ENCODE measurements at regions of chr5 and their contacts with region 1.

Region 1: GRCh38 chr5:178732281-178732680 is 1.8 kb upstream of the ZNF354A start:
- DNase-seq: no peak
- ATAC-seq: no peak
- H3K4me3 ChIP-seq: no peak overlapping the region
- H3K27ac ChIP-seq: no peak overlapping the region
- H3K4me1 ChIP-seq: 0 out of 2 replicates have a peak, but pooled peaks cover 2% of the 10 kb centered on the region
- H3K27me3 ChIP-seq: no peaks in the 10 kb centered on the region
- CTCF ChIP-seq: no peak

Region 2: GRCh38 chr5:178279725-178280438 is 452.4 kb before region 1 on chr5:
- CTCF ChIA-PET with region 1: no interaction called
- POLR2A ChIA-PET with region 1: no interaction called
- intact Hi-C with region 1: loop called (anchors 1 kb)
- DNase-seq: peak; percentile 85
- ATAC-seq: peak; percentile 94
- H3K4me3 ChIP-seq: no peak overlapping the region
- H3K27ac ChIP-seq: no peak overlapping the region
- H3K4me1 ChIP-seq: no peaks in the 10 kb centered on the region
- H3K27me3 ChIP-seq: peaks cover 27% of the 10 kb centered on the region
- CTCF ChIP-seq: peak; percentile 98

Region 3: GRCh38 chr5:178706591-178706990 is 25.7 kb before region 1 on chr5:
- CTCF ChIA-PET with region 1: no interaction called
- POLR2A ChIA-PET with region 1: interaction called, 33 read pairs
- intact Hi-C with region 1: no loop called
- DNase-seq: no peak
- ATAC-seq: no peak
- H3K4me3 ChIP-seq: no peak overlapping the region
- H3K27ac ChIP-seq: no peak overlapping the region
- H3K4me1 ChIP-seq: no peaks in the 10 kb centered on the region
- H3K27me3 ChIP-seq: no peaks in the 10 kb centered on the region
- CTCF ChIP-seq: no peak

Region 4: GRCh38 chr5:178838695-178839685 is 106.7 kb after region 1 on chr5:
- CTCF ChIA-PET with region 1: interaction called, 7 read pairs
- POLR2A ChIA-PET with region 1: no interaction called
- intact Hi-C with region 1: loop called (anchors 1 kb)
- DNase-seq: peak; percentile 82
- ATAC-seq: peak; percentile 98
- H3K4me3 ChIP-seq: no peak overlapping the region
- H3K27ac ChIP-seq: no peak overlapping the region
- H3K4me1 ChIP-seq: no peaks in the 10 kb centered on the region
- H3K27me3 ChIP-seq: peaks cover 10% of the 10 kb centered on the region; the same call in 1 of the 2 replicates
- CTCF ChIP-seq: peak; percentile 89

Region 5: DNA sequence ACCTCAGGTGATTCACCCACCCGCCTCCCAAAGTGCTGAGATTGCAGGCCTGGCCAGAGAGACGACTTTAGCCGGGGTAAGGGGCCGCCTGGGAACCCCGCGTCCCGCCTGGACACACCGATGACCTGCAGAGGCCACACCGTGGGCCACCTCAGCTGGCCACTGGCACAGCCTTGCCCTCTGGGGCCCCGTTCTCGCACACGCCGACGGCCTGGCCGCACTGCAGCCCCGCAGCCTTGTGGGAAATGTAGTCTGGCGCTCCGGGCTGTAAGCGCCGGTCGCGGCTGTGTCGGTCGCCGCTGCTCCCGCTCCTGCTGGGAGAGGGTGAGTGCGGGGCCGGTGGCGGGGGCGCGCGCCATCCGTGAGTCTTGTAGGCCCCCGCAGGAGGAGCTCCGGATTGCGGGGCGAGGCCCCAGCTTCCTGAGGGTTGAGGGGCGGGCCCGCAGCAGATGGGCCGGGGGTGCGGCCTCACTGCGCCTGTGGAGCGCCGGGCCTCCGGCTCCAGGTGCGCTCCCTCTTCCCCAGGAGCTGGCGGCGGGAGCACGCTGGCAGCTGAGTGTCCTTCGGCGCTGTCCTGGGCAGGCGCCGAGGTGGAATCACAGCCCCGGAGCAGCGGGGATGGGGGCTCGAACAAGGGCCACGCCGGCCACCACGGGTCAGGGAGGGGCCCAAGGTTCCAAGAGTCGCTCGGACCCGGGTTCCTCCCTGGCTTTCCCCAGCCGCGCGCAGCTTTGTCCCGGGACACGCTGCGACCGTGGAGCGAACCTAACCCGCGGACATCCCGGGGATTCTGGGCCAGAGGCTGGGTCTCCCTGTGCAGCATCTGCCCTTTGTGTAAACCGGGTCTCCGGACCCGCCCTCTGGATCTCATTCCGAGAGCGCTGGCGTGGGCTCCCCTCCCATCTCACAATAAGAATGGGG is 163.6 kb after region 1 on chr5 and contains the start of gene ZFP2:
- CTCF ChIA-PET with region 1: no interaction called
- POLR2A ChIA-PET with region 1: no interaction called
- intact Hi-C with region 1: no loop called
- DNase-seq: peak; percentile 50
- ATAC-seq: peak; percentile 94
- H3K4me3 ChIP-seq: peak within 1 kb of the TSS; percentile 76
- H3K27ac ChIP-seq: no peak within 1 kb of the TSS
- H3K4me1 ChIP-seq: no peaks in the 10 kb centered on the region
- H3K27me3 ChIP-seq: no peaks in the 10 kb centered on the region
- CTCF ChIP-seq: no peak
- total RNA-seq, gene ZFP2: 0.07 TPM in 1 of 2 replicates, not detected in the other

Region 6: GRCh38 chr5:179142434-179143198 is 410.3 kb after region 1 on chr5:
- CTCF ChIA-PET with region 1: no interaction called
- POLR2A ChIA-PET with region 1: no interaction called
- intact Hi-C with region 1: no loop called
- DNase-seq: peak; percentile 27
- ATAC-seq: no peak
- H3K4me3 ChIP-seq: no peak overlapping the region
- H3K27ac ChIP-seq: no peak overlapping the region
- H3K4me1 ChIP-seq: no peaks in the 10 kb centered on the region
- H3K27me3 ChIP-seq: no peaks in the 10 kb centered on the region
- CTCF ChIP-seq: no peak

Region 7: DNA sequence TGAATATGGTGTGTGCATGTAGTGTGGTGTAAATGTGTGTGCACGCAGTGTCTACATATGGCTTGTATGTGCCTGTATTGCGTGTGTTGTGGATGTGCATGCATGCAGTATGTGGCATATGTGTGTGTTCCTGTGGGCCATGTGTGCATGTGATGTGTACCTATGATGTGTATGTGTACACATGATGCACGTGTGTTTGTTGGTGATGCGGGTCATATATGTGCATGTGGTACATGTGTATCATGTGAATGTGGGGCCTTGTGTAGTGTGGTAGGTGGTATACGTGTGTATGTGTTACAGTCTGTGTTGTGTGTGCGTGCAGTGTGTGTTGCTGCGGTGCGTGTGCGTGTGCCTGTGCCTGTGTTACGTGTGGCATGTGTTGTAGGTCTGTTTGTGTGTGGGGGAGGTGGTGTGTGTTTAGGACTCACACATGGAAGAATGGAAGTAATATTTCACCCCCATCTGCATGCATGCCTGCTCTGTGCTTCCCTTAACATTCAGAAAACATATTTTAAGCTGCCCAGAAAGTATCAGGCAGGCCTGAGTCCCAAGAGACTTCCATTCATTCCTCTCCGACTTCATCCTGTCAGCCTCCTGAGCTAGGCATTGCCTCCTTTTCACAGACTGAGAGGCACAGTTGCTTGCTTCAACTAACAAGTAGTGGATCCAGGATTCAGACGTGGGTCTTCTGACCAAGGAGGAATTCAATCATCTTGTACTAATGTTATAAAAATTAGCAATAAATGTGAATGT is 762.7 kb after region 1 on chr5:
- CTCF ChIA-PET with region 1: no interaction called
- POLR2A ChIA-PET with region 1: no interaction called
- intact Hi-C with region 1: loop called (anchors 5 kb)
- DNase-seq: no peak
- ATAC-seq: no peak
- H3K4me3 ChIP-seq: no peak overlapping the region
- H3K27ac ChIP-seq: no peak overlapping the region
- H3K4me1 ChIP-seq: no peaks in the 10 kb centered on the region
- H3K27me3 ChIP-seq: no peaks in the 10 kb centered on the region
- CTCF ChIP-seq: no peak